ENCODE measurements at regions of chr17 and their contacts with region 1.

Region 1: DNA sequence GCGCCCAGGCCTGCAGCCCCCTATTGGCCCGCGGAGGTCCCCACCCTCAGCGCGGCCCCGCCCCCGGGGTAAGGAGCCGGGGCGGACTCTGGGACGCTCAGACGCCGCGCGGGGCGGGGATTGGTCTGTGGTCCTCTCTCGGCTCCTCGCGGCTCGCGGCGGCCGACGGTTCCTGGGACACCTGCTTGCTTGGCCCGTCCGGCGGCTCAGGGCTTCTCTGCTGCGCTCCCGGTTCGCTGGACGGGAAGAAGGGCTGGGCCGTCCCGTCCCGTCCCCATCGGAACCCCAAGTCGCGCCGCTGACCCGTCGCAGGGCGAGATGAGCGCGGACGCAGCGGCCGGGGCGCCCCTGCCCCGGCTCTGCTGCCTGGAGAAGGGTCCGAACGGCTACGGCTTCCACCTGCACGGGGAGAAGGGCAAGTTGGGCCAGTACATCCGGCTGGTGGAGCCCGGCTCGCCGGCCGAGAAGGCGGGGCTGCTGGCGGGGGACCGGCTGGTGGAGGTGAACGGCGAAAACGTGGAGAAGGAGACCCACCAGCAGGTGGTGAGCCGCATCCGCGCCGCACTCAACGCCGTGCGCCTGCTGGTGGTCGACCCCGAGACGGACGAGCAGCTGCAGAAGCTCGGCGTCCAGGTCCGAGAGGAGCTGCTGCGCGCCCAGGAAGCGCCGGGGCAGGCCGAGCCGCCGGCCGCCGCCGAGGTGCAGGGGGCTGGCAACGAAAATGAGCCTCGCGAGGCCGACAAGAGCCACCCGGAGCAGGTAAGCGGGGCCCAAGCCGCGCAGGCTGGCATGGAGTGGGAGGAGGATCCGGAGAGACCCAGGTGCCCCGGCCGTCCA is at the start of gene NHERF1:
- DNase-seq: peak; percentile 85 to 98 (median 92)
- H3K4me3 ChIP-seq: peak within 1 kb of the TSS; percentile 43 to 99 (median 88)
- H3K27ac ChIP-seq: peak within 1 kb of the TSS in 57 of 59 donors; percentile 48 to 93 (median 83)
- H3K27me3 ChIP-seq: peaks cover 0 to 16% (median 0%) of the 10 kb centered on the region in 45 donors
- CTCF ChIP-seq: peak in 14 of 56 donors; percentile 1 to 67 (median 12)
- total RNA-seq, gene NHERF1: 37.5 to 169 (median 62.4) TPM

Region 2: GRCh38 chr17:74379495-74380085 is 369.2 kb before region 1 on chr17:
- intact Hi-C with region 1: loop called in 1 of 2 experiments (anchors 10 kb)
- DNase-seq: peak; percentile 86 to 96 (median 90)
- H3K4me3 ChIP-seq: peak overlapping the region in 3 of 59 donors; percentile 23 to 24 (median 23)
- H3K27ac ChIP-seq: peak overlapping the region in 15 of 59 donors; percentile 0 to 77 (median 25)
- H3K27me3 ChIP-seq: no peaks in the 10 kb centered on the region
- CTCF ChIP-seq: peak; percentile 77 to 99 (median 96)

Region 3: GRCh38 chr17:74770498-74771318 is 22.0 kb after region 1 on chr17:
- intact Hi-C with region 1: loop called (anchors 1 to 2 kb)
- DNase-seq: peak in 6 of 10 donors; percentile 59 to 91 (median 72)
- H3K4me3 ChIP-seq: no peak overlapping the region
- H3K27ac ChIP-seq: peak overlapping the region in 28 of 59 donors; percentile 1 to 95 (median 34)
- H3K27me3 ChIP-seq: no peaks in the 10 kb centered on the region
- CTCF ChIP-seq: peak; percentile 40 to 91 (median 77)

Region 4: DNA sequence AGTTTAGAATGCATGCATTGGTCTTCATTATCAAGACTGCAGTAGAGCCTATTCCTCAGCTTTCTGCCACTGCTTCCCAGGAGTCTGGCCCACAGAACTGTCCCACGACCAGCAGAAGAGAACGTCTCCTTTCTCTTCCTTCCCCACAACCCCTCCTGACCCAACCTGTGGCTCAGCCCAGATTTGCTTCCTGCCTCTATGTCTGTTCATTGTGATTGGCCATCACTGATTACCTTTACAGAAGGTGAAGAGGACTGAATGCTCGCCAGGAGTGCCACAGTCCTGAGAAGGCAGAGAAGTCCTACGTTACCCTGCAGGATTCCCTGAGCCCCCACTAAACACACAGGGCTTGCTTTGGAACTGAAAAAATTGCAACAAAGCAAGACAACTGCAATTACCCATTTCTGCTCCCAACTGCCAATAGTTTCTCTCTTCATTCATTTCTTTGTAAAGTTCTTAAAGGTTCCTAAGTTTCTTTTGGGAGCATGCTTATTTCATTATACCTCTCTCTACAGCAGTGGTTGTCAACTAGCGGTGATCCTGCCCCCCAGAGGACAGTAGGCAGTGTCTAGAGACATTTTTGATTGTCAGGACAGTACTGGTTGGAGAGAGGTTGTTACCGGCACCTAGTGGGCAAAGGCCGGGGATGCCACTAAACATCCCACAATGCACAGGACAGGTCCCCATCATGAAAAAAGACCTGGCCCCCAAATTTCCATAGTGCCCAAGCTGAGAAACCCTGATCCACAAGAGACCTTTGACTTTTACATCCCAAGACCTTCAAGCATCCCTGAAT is 31.9 kb after region 1 on chr17:
- intact Hi-C with region 1: loop called (anchors 5 kb)
- DNase-seq: peak in 3 of 10 donors; percentile 33 to 74 (median 65)
- H3K4me3 ChIP-seq: peak overlapping the region in 1 of 59 donors; percentile 38
- H3K27ac ChIP-seq: peak overlapping the region in 55 of 59 donors; percentile 14 to 96 (median 88)
- H3K27me3 ChIP-seq: no peaks in the 10 kb centered on the region
- CTCF ChIP-seq: peak in 54 of 56 donors; percentile 18 to 79 (median 58)

Region 5: DNA sequence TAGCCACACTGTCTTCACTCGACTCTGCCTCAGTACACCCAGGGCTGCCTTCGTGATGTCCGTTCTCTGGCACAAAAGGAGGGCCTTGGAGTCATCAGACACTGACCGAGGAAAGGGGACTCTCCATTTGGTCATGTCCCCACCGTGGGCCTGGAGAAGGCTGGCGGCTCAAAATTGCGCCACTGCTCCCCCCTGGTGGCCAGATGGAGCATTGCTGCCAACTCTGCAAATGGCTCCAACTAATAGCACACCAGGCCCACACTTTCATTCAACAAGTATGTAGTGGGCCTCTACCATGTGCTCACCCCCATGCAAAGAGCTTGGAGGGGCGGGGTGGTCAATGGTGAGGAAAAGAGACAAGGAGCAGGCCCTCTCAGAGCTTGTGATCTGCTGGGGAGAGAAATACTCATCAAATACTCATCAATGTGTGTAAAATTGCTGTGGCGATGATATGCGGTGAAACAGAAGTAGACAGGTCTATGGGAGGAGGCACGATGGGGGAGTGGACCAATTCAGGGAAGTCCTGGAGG is 116.2 kb after region 1 on chr17:
- intact Hi-C with region 1: loop called (anchors 2 to 5 kb)
- DNase-seq: peak; percentile 71 to 91 (median 88)
- H3K4me3 ChIP-seq: no peak overlapping the region
- H3K27ac ChIP-seq: peak overlapping the region in 1 of 59 donors; percentile 95
- H3K27me3 ChIP-seq: peaks cover 0 to 23% (median 13%) of the 10 kb centered on the region in 45 donors
- CTCF ChIP-seq: peak; percentile 91 to 99 (median 98)

Region 6: DNA sequence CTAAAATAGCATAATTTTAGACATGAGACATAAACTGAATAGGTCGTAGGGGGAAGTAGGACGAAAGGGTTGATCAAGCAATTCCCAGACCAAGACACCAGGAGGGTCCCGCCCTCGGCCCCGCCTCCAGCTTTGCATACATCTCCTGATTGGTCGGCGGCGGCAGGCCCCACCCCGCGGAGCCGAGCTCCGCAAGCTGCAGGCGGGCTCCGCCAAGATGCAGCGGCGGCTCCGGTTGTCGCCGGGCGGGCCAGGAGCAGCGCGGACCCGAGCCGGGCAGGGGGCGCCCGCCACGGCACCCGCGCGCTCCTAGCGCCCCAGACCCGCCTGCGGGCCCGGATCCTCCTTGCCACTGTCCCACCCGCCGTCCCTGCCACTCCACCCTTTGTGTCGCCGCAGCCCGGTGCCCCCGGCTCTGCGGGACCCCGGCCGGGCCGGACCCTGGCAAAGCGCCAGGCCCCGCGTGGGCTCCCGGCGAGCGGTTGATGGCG is 238.7 kb after region 1 on chr17 and contains the start of gene CDR2L:
- intact Hi-C with region 1: no loop called
- DNase-seq: peak; percentile 98 to 99 (median 99)
- H3K4me3 ChIP-seq: peak within 1 kb of the TSS; percentile 19 to 97 (median 83)
- H3K27ac ChIP-seq: peak within 1 kb of the TSS; percentile 29 to 98 (median 90)
- H3K27me3 ChIP-seq: no peaks in the 10 kb centered on the region
- CTCF ChIP-seq: peak in 16 of 56 donors; percentile 1 to 48 (median 14)
- total RNA-seq, gene CDR2L: 11.9 to 63.9 (median 22.6) TPM

Measured in dorsolateral prefrontal cortex (tissue), 120 donors.